ENCODE measurements at regions of chr10 and their contacts with region 1.

Region 1: DNA sequence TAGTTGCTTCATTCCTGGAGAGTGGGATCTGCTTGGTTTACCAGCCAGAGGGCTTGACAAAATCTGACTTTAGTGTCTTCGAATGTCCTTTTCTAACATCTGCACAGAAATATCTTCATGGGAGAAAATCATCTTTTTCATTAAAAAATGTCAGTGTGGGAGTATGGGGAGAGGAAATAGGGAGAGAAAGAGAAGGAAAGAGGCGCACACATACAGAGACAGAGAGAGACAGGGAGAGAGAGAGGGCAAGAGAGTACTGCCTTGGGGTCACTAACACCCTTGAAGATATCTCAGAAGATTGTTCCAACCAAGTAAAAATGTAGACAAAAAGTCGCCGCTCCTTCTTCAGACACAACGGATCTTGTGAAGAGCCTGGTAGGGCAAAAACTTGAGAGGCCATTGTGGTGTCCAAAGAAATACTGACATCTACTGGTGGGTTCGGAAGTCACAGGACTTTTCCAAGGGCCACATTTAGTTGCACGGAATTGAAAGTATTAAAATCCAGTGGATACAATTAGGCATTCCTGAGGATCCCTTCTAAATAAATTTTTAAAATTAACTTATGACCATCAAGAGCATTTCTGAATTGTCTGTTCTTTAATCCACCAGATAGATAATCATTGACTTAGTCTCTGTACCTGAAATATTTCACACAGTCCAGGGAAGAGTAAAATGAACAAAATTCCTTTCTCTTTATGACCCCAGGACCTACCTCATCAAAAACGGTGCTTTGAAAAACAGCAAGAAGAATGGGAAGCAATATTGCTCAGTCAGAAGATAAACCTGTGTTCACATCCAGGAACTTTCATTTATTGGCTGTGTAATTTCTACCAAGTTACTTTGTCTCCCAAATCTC is 29.7 kb downstream of the VIM start:
- DNase-seq: peak; percentile 40
- H3K4me3 Mint-ChIP-seq: no peak overlapping the region
- H3K27ac Mint-ChIP-seq: no peak overlapping the region
- H3K4me1 Mint-ChIP-seq: peaks cover 13% of the 10 kb centered on the region
- H3K27me3 Mint-ChIP-seq: peaks cover 12% of the 10 kb centered on the region

Region 2: GRCh38 chr10:16828114-16828568 is 429.6 kb before region 1 on chr10:
- intact Hi-C with region 1: loop called (anchors 1 kb)
- DNase-seq: peak; percentile 46
- H3K4me3 Mint-ChIP-seq: no peak overlapping the region
- H3K27ac Mint-ChIP-seq: no peak overlapping the region
- H3K4me1 Mint-ChIP-seq: peaks cover 5% of the 10 kb centered on the region
- H3K27me3 Mint-ChIP-seq: peaks cover 16% of the 10 kb centered on the region

Region 3: GRCh38 chr10:16843252-16843870 is 414.3 kb before region 1 on chr10:
- intact Hi-C with region 1: loop called (anchors 1 kb)
- DNase-seq: no peak
- H3K4me3 Mint-ChIP-seq: no peak overlapping the region
- H3K27ac Mint-ChIP-seq: no peak overlapping the region
- H3K4me1 Mint-ChIP-seq: peaks cover 2% of the 10 kb centered on the region
- H3K27me3 Mint-ChIP-seq: peaks cover 17% of the 10 kb centered on the region

Region 4: DNA sequence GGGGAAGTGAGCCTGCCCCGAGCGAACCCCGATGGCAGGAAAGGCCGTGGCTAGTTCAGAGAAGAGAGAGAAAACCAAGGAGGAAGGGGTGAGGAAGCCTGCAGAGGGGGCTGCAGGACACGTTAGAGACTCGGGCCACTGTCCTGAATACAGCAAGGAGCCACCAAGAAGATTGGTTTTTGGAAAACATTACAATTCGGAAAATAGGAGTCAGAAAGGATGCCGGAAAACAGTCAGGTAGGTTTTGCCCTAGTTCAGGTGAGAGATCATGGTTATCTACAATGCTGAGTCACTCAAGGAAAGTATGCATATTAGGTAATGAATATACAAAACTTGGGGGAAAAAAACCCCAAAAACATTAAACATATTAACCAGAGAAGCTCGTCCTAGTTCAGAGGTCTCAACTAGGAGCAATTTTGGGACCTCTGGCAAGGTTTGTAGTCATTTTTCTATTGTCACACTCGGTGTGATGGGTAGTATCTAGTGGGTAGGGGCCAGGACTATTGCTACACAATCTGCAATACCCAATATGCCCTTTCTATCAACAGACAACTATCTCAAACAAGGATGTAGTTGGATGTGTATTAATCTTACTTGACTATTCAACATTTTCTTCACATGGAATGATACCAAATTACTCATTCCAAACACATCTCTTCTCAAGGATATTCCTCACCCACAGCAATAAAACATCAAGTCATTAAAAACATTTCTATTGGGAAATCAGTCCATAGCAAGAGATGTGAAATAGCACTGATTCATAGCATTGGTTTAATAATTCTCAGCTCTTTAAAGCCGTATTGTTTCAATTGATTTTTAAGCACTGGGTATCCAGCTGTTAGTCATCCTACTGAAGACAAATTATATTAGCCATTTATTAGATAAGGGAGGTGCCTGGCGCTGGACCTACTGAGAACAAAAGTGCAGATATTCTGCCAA is 366.1 kb before region 1 on chr10:
- intact Hi-C with region 1: loop called (anchors 1 kb)
- DNase-seq: no peak
- H3K4me3 Mint-ChIP-seq: no peak overlapping the region
- H3K27ac Mint-ChIP-seq: no peak overlapping the region
- H3K4me1 Mint-ChIP-seq: peaks cover 5% of the 10 kb centered on the region
- H3K27me3 Mint-ChIP-seq: peaks cover 31% of the 10 kb centered on the region

Region 5: DNA sequence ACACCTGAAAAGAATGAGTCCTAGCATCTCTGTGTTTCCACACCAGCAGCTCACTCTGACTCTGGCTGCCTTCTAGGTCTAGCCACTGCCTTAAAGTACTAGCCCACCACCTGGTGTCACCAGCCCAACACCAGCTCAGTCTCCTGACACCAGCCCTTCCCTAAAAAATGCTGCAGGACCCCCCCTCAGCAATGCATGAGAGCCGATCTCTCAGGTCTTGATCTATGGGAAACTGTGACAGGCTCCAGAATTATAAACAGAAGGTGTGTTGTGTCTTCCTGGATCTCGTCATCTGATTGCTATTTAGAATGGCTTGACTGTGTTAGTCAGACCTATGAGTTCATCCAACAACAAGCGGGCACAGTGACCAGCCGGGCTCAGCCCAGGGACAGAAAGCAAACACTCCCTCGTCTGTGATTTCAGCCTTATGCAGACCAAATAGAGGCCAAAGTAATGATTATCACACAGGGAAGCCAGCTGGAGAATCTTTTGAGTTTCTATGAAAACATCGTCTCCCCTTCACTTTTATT is 194.7 kb before region 1 on chr10:
- intact Hi-C with region 1: loop called (anchors 5 kb)
- DNase-seq: no peak
- H3K4me3 Mint-ChIP-seq: no peak overlapping the region
- H3K27ac Mint-ChIP-seq: no peak overlapping the region
- H3K4me1 Mint-ChIP-seq: peaks cover 36% of the 10 kb centered on the region
- H3K27me3 Mint-ChIP-seq: peaks cover 17% of the 10 kb centered on the region